ENCODE measurements at regions of chr13 and their contacts with region 1.

Region 1: DNA sequence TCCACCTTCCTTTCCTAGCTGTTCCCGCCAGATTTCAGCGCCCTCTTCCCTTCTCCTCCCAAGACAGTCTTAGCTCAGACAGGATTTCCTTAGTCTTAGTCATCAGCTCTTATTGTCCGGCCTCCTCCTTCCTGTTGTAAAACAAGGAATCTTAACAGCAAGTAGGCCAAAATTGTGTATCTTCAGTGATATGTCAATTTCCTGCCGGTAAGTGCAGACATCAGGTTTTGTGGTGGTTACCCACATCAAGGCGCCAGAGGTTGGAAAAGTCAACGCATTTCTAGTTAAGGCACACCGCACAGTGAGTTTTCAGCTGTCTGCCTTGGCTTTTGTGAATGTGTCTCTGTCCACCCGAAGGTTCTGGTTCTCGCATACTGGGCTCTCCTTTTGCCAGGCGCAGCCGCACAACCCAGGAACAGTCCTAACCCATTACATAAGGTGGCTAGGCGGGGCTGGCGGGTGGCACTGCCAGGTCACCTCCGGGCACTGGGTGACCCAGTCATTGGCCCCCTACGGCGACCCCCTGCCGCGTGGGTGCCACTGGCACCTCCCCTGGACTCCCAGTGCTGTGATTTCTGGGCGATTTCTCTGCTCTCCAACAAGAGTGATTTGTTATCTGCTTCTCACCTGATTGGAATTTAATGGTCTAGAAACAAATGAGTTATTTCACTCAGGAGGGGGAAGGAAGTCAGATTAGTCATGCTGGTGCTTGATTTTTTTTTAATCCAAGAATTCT is 12.9 kb downstream of the COL4A2 start:
- DNase-seq: peak; percentile 81
- ATAC-seq: peak; percentile 73
- H3K4me3 ChIP-seq: peak overlapping the region; percentile 50
- H3K27ac ChIP-seq: peak overlapping the region; percentile 88
- H3K4me1 ChIP-seq: peaks cover 37% of the 10 kb centered on the region
- H3K27me3 ChIP-seq: no peaks in the 10 kb centered on the region
- CTCF ChIP-seq: no peak

Region 2: DNA sequence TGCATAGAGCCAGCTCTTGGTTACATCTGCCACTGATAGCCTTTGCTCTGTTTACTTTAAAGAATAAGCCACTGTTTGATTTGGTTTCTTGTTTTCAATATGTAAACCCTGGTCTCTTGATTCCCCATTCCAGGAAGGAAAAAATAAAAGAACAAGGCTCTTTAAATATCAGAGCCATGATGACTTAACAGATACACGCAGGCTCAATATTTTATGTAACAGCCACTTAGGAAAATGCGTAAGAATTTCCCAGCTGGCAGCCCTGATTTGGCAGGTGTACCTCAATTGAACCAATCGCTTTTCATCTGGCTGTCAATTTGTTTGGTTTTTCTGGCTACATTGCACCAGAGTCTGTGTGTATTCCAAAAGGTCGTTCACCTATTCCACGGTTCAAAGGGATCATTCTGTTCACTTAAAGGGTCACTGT is 599.2 kb before region 1 on chr13:
- CTCF ChIA-PET with region 1: no interaction called
- POLR2A ChIA-PET with region 1: no interaction called
- intact Hi-C with region 1: no loop called
- DNase-seq: no peak
- ATAC-seq: no peak
- H3K4me3 ChIP-seq: no peak overlapping the region
- H3K27ac ChIP-seq: no peak overlapping the region
- H3K4me1 ChIP-seq: no peaks in the 10 kb centered on the region
- H3K27me3 ChIP-seq: no peaks in the 10 kb centered on the region
- CTCF ChIP-seq: no peak

Region 3: GRCh38 chr13:109904218-109904617 is 415.7 kb before region 1 on chr13:
- CTCF ChIA-PET with region 1: no interaction called
- POLR2A ChIA-PET with region 1: no interaction called
- intact Hi-C with region 1: no loop called
- DNase-seq: no peak
- ATAC-seq: no peak
- H3K4me3 ChIP-seq: no peak overlapping the region
- H3K27ac ChIP-seq: no peak overlapping the region
- H3K4me1 ChIP-seq: no peaks in the 10 kb centered on the region
- H3K27me3 ChIP-seq: no peaks in the 10 kb centered on the region
- CTCF ChIP-seq: no peak

Region 4: DNA sequence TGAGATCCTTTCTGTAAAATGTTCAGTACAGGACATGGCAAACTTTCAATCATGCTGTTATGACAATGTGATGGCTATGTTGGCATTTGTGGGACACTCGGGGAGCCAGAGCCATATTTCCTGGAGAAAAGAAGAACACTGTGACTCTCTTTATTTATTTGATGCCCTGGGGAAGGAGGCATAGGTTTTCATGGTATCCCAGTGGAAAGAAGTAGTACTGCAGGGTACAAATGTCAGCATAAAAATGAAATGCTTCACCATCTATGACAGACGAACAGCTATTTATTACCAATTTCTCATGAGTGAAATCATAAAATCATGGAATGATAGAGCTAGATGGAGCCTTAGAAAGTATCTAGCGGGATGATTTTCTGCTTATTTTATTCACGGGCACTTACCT is 230.1 kb before region 1 on chr13:
- CTCF ChIA-PET with region 1: no interaction called
- POLR2A ChIA-PET with region 1: no interaction called
- intact Hi-C with region 1: no loop called
- DNase-seq: no peak
- ATAC-seq: no peak
- H3K4me3 ChIP-seq: no peak overlapping the region
- H3K27ac ChIP-seq: no peak overlapping the region
- H3K4me1 ChIP-seq: peaks cover 9% of the 10 kb centered on the region
- H3K27me3 ChIP-seq: no peaks in the 10 kb centered on the region
- CTCF ChIP-seq: peak; percentile 47

Region 5: DNA sequence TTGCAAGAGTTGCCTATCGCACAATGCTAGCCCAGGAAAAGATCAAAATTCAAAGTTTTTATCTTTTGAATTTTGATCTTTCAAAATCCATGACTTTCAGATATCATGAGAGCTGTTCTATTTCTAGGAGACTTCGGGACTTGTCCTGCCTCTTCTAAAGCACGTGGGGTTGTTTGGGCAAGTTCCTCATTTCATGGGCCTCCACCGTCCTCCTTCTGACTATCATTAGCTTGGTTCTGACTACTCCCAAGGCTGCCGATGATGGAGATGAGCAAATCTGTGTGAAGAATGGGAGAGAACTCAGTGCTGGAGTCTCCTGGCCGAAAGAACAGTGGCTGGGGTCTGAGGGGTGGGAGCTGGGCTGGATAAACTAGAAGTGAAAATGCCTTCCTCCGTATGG is 99.5 kb before region 1 on chr13:
- CTCF ChIA-PET with region 1: no interaction called
- POLR2A ChIA-PET with region 1: no interaction called
- intact Hi-C with region 1: loop called (anchors 5 kb)
- DNase-seq: no peak
- ATAC-seq: no peak
- H3K4me3 ChIP-seq: no peak overlapping the region
- H3K27ac ChIP-seq: no peak overlapping the region
- H3K4me1 ChIP-seq: no peaks in the 10 kb centered on the region
- H3K27me3 ChIP-seq: no peaks in the 10 kb centered on the region
- CTCF ChIP-seq: no peak

Region 6: DNA sequence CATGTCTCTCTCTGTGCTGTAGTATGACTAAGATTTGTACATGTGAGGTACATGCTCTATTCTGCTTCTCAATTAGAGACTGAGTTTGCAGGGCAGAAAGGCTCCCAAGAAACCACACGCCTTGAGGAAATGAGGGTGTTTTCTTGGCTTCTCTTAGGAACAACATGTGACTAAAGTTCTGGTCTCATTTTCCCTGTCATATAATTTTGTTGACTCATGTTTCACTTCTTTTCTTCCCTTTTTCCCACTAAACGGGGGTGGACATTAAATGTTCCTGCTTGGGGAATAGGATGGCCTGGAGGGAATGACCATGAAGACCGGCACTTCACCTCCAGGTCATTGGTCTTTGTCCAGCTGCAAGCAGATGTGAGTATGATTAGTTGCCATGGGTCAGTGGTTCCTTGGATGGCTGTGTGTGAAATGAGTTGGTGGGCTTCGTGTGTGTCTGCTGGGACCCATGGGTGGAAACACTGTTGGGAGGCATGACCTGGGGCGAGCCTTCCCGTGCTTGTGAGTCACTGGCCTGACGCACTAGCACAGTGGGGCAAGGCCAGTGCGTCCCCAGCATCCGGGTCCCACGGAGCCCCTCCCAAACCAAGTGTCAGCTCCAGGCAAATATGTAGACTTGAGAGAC is 69.6 kb before region 1 on chr13:
- CTCF ChIA-PET with region 1: interaction called, 3 read pairs
- POLR2A ChIA-PET with region 1: no interaction called
- intact Hi-C with region 1: loop called (anchors 5 kb)
- DNase-seq: peak; percentile 11
- ATAC-seq: peak; percentile 38; the same call in 1 of the 2 replicates
- H3K4me3 ChIP-seq: no peak overlapping the region
- H3K27ac ChIP-seq: no peak overlapping the region
- H3K4me1 ChIP-seq: peaks cover 7% of the 10 kb centered on the region
- H3K27me3 ChIP-seq: no peaks in the 10 kb centered on the region
- CTCF ChIP-seq: no peak

Region 7: DNA sequence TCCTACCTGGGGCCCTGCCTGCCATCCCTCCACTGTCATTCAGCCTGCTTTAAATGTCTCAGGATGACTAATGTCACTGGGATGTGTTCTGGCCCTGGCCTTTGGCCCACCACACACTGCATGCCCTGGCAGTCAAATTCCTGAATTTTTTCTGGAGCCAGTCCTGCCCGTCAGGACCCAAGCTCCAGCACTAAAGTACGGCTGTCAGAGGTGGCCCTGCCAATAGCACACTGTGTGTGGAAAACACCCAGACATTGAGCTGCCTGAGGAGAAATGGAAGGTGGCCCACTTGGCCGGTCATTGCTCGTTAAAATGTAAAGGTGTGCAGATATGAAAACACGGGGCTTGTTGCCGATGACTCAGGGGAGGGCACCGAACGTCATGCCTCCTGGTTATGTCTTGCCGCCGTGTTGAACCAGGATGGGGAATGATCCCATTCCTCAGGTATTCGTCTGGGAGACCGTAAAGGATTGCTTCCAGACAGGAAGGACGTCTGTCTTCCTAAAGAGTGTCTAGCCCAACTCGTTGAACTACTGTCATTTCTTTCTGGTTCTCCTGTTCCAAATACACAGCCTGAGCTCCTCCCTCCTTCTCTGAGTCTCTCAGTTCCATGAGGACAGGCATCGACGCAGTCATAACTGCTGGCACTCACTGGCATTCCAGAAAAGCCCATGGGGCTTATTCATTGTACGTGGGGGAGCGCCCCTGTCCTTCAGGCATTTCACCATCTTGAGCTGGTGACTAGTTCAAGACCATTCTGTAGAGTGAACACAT is 27.8 kb after region 1 on chr13:
- CTCF ChIA-PET with region 1: interaction called, 3 read pairs
- POLR2A ChIA-PET with region 1: interaction called, 4 read pairs
- intact Hi-C with region 1: loop called (anchors 1 kb)
- DNase-seq: peak; percentile 93
- ATAC-seq: peak; percentile 49
- H3K4me3 ChIP-seq: peak overlapping the region; percentile 39; the same call in 1 of the 2 replicates
- H3K27ac ChIP-seq: peak overlapping the region; percentile 92
- H3K4me1 ChIP-seq: peaks cover 70% of the 10 kb centered on the region
- H3K27me3 ChIP-seq: no peaks in the 10 kb centered on the region
- CTCF ChIP-seq: no peak

Region 8: DNA sequence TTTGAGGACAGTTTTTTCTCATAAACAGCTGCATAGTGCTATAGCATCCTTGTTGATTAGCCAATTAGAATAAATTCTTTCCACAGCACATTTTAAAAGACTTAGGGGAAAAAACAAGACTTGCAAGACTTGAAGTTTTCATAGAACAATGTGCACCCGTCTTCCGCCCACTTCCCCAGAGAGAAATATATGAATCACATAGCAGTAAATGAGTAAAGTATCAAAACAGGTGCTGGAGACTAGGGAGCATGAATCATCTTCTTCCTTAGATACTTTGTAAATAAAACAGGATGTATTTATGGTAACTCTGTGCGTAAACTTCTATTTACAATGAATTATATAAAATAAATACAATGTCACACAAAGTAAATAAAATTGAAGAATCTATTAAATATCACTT is 62.3 kb after region 1 on chr13:
- CTCF ChIA-PET with region 1: no interaction called
- POLR2A ChIA-PET with region 1: interaction called, 3 read pairs
- intact Hi-C with region 1: loop called (anchors 1 kb)
- DNase-seq: peak; percentile 82
- ATAC-seq: peak; percentile 72
- H3K4me3 ChIP-seq: no peak overlapping the region
- H3K27ac ChIP-seq: peak overlapping the region; percentile 97
- H3K4me1 ChIP-seq: peaks cover 39% of the 10 kb centered on the region
- H3K27me3 ChIP-seq: no peaks in the 10 kb centered on the region
- CTCF ChIP-seq: no peak

Region 9: GRCh38 chr13:110412132-110412914 is 92.4 kb after region 1 on chr13:
- CTCF ChIA-PET with region 1: interaction called, 6 read pairs
- POLR2A ChIA-PET with region 1: no interaction called
- intact Hi-C with region 1: loop called (anchors 5 kb)
- DNase-seq: peak; percentile 92
- ATAC-seq: peak; percentile 87
- H3K4me3 ChIP-seq: no peak overlapping the region
- H3K27ac ChIP-seq: peak overlapping the region; percentile 88
- H3K4me1 ChIP-seq: peaks cover 32% of the 10 kb centered on the region
- H3K27me3 ChIP-seq: no peaks in the 10 kb centered on the region
- CTCF ChIP-seq: peak; percentile 87

Region 10: DNA sequence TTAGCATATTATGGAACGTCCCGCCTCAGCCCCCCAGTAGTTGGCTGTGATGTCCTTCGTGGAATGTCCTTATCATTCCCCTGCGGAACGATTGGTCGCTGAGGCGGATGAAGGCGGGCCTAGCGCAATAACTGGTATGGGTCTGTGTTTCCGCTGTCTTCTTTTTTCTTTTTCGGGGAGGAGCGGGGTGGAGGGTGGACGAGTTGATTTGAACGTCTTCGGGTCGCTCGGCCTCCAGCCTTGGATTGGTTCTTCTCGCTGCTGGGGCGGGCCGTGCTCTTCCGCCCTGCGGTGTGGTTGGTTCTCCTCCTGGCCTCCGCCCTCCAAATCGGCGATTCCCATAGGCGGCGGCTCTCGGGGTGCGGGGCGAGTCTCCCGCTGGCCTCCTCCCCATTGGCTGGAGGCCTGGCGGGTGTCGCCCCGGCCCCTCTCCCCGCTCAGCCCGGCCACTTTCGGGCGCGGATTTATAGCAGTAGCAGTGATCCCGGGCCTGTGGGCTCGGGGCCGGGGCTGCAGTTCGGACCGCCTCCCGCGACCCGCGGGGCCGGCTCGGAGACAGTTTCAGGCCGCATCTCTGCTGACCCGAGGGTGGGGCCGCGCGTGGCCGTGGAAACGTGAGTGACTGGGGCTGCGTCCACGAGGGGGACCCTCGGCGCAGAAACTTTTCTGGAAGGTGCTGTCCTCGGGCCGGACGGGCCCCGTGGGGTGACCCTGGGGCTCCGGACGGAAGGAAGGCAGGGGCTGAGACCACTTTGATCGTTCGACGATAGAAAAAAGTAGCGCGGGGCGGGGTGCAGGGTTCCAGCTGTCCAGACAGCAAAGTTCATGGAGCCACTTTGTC is 395.7 kb after region 1 on chr13:
- CTCF ChIA-PET with region 1: no interaction called
- POLR2A ChIA-PET with region 1: interaction called, 10 read pairs
- intact Hi-C with region 1: no loop called
- DNase-seq: peak; percentile 96
- ATAC-seq: peak; percentile 62
- H3K4me3 ChIP-seq: peak overlapping the region; percentile 99
- H3K27ac ChIP-seq: peak overlapping the region; percentile 48
- H3K4me1 ChIP-seq: peaks cover 8% of the 10 kb centered on the region
- H3K27me3 ChIP-seq: no peaks in the 10 kb centered on the region
- CTCF ChIP-seq: peak; percentile 19; the same call in 1 of the 2 replicates

Measured in PC-3 (cell line).